ENCODE measurements at regions of chr12 and their contacts with region 1.

Region 1: DNA sequence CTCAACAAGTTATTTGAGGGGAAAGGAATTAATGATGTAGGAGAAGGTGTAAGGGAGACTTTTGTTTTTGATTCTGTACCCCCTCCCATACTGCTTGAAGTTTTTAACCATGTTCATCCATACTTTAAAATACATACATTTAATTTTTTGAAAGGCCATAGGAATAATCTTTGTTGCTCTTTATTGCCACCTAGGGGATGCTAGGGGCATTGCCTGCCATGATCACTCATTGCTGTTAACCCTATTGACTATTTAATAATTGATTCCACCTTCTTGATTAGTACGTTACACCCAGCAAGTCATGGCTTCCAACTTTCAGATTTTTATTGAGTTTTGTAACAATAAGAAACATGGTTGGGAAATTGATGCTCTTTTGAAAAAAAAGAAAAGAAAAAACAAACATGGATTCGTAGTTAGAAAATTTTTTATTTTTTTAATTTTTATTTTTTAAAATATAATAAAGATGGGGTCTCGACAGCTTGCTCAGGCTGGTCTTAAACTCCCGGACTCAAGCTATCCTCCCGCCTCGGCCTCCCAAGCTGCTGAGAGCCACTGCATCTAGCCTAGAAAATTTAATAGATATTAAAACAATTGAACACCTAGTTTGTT is 8.5 kb upstream of the PRKAB1 start:
- DNase-seq: no peak
- ATAC-seq: peak; percentile 87
- H3K4me3 ChIP-seq: no peak overlapping the region
- H3K27ac ChIP-seq: no peak overlapping the region
- H3K4me1 ChIP-seq: no peaks in the 10 kb centered on the region
- H3K27me3 ChIP-seq: no peaks in the 10 kb centered on the region
- CTCF ChIP-seq: peak; percentile 82 to 90 (median 90)
- EP300 ChIP-seq: no peak
- POLR2A ChIP-seq: no peak
- RAD21 ChIP-seq: peak; percentile 42

Region 2: GRCh38 chr12:119649202-119649808 is 10.1 kb before region 1 on chr12:
- CTCF ChIA-PET with region 1: interaction called, 23 read pairs
- POLR2A ChIA-PET with region 1: no interaction called
- RAD21 ChIA-PET with region 1: no interaction called
- SMC1A ChIA-PET with region 1: interaction called, 6 read pairs
- in situ Hi-C with region 1: no loop called
- intact Hi-C with region 1: no loop called
- DNase-seq: no peak
- ATAC-seq: no peak
- H3K4me3 ChIP-seq: no peak overlapping the region
- H3K27ac ChIP-seq: no peak overlapping the region
- H3K4me1 ChIP-seq: no peaks in the 10 kb centered on the region
- H3K27me3 ChIP-seq: no peaks in the 10 kb centered on the region
- CTCF ChIP-seq: peak; percentile 61 to 69 (median 62)
- EP300 ChIP-seq: no peak
- POLR2A ChIP-seq: no peak
- RAD21 ChIP-seq: peak; percentile 67

Region 3: DNA sequence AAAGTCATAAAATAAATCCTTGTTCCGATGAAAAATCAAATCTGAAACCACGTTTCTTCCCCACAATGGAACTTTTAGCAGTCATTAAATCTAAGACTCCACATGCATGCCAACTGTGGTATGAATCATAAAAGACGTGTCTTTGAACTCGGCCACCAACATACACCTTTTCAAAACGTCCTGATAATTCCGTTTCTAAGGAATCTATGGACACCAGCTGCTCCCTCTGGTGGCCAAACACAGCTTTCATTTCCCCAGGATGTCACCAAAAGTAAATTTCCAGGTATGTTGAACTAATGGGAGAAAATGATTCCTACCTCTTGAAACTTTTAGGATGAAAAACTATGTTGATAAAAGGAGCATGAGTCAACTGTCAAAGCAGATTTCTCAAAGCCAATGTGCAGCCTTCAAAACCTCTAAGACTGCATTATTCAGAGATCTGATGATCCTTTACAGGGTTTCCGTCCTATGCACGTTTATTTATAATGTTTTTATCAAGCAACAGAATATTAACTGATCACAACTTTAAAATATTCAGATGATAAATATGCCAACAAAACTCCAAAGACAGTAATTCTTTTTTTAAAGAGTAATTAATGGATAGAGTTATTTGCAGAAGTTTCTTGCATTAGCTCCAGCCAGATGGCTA is 121.5 kb after region 1 on chr12:
- CTCF ChIA-PET with region 1: interaction called, 22 read pairs
- POLR2A ChIA-PET with region 1: no interaction called
- RAD21 ChIA-PET with region 1: interaction called, 5 read pairs
- SMC1A ChIA-PET with region 1: interaction called, 9 read pairs
- in situ Hi-C with region 1: no loop called
- intact Hi-C with region 1: no loop called
- DNase-seq: no peak
- ATAC-seq: no peak
- H3K4me3 ChIP-seq: no peak overlapping the region
- H3K27ac ChIP-seq: no peak overlapping the region; the same call in 1 of the 2 replicates
- H3K4me1 ChIP-seq: peaks cover 6% of the 10 kb centered on the region
- H3K27me3 ChIP-seq: no peaks in the 10 kb centered on the region
- CTCF ChIP-seq: peak; percentile 41 to 56 (median 56); a peak in 5 of 6 replicates
- EP300 ChIP-seq: no peak
- POLR2A ChIP-seq: no peak
- RAD21 ChIP-seq: 0 out of 2 replicates have a peak, but pooled peaks have one; percentile 17